ENCODE measurements at regions of chr3 and their contacts with region 1.

Region 1: GRCh38 chr3:39819899-39820298 is 10.5 kb downstream of the MYRIP start:
- DNase-seq: no peak
- H3K4me3 ChIP-seq: no peak overlapping the region
- H3K27ac ChIP-seq: no peak overlapping the region
- H3K4me1 ChIP-seq: no peaks in the 10 kb centered on the region
- H3K27me3 ChIP-seq: no peaks in the 10 kb centered on the region
- CTCF ChIP-seq: no peak
- EP300 ChIP-seq: no peak
- POLR2A ChIP-seq: no peak

Region 2: GRCh38 chr3:39288300-39288808 is 531.5 kb before region 1 on chr3:
- intact Hi-C with region 1: no loop called
- DNase-seq: peak; percentile 59 to 74 (median 74)
- H3K4me3 ChIP-seq: no peak overlapping the region
- H3K27ac ChIP-seq: no peak overlapping the region
- H3K4me1 ChIP-seq: no peaks in the 10 kb centered on the region
- H3K27me3 ChIP-seq: no peaks in the 10 kb centered on the region
- CTCF ChIP-seq: peak; percentile 38 to 79 (median 64)
- EP300 ChIP-seq: no peak
- POLR2A ChIP-seq: peak; percentile 15

Region 3: GRCh38 chr3:39855517-39855916 is 35.6 kb after region 1 on chr3:
- intact Hi-C with region 1: loop called in 1 of 4 experiments (anchors 1 kb)
- DNase-seq: no peak
- H3K4me3 ChIP-seq: no peak overlapping the region
- H3K27ac ChIP-seq: no peak overlapping the region
- H3K4me1 ChIP-seq: no peaks in the 10 kb centered on the region
- H3K27me3 ChIP-seq: no peaks in the 10 kb centered on the region
- CTCF ChIP-seq: no peak
- EP300 ChIP-seq: no peak
- POLR2A ChIP-seq: no peak

Region 4: DNA sequence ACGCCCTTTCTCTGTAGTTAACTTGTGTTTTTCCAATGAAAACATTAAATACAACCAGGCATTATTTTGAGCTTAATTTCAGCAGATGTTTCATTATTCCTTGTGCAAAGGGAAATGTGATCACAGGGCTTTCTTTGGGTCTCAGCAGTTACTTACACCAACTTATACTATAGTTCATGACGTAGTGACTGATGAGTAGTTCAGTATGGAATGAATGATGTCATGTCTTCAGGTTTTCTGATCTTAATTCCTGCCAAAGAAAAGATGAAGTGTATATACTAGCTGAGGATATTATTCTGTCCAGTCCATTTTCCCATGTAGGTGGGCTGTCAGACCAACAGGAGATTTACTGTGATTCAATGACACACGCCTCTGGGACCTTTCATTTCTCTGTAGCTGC is 50.8 kb after region 1 on chr3:
- intact Hi-C with region 1: no loop called
- DNase-seq: no peak
- H3K4me3 ChIP-seq: no peak overlapping the region
- H3K27ac ChIP-seq: no peak overlapping the region
- H3K4me1 ChIP-seq: no peaks in the 10 kb centered on the region
- H3K27me3 ChIP-seq: no peaks in the 10 kb centered on the region
- CTCF ChIP-seq: no peak
- EP300 ChIP-seq: no peak
- POLR2A ChIP-seq: no peak